Naive thymus-derived CD4-positive, alpha-beta T cell (primary cell): ENCODE measurements at regions of chr18 and their contacts with region 1.

Region 1: GRCh38 chr18:43159086-43159770 is 43.7 kb upstream of the RIT2 start:
- DNase-seq: no peak
- ATAC-seq: no peak
- H3K4me3 ChIP-seq: no peak overlapping the region
- H3K4me3 Mint-ChIP-seq: no peak overlapping the region
- H3K27ac ChIP-seq: no peak overlapping the region
- H3K27ac Mint-ChIP-seq: no peak overlapping the region
- H3K4me1 ChIP-seq: no peaks in the 10 kb centered on the region
- H3K4me1 Mint-ChIP-seq: no peaks in the 10 kb centered on the region
- H3K27me3 ChIP-seq: no peaks in the 10 kb centered on the region
- H3K27me3 Mint-ChIP-seq: no peaks in the 10 kb centered on the region

Region 2: GRCh38 chr18:43115076-43115921 is 43.9 kb before region 1 on chr18 and contains the start of gene RIT2:
- CTCF ChIA-PET with region 1: no interaction called
- POLR2A ChIA-PET with region 1: no interaction called
- intact Hi-C with region 1: no loop called
- DNase-seq: no peak
- ATAC-seq: no peak
- H3K4me3 ChIP-seq: no peak within 1 kb of the TSS
- H3K4me3 Mint-ChIP-seq: no peak within 1 kb of the TSS
- H3K27ac ChIP-seq: no peak within 1 kb of the TSS
- H3K27ac Mint-ChIP-seq: no peak within 1 kb of the TSS
- H3K4me1 ChIP-seq: no peaks in the 10 kb centered on the region
- H3K4me1 Mint-ChIP-seq: no peaks in the 10 kb centered on the region
- H3K27me3 ChIP-seq: no peaks in the 10 kb centered on the region
- H3K27me3 Mint-ChIP-seq: no peaks in the 10 kb centered on the region
- total RNA-seq, gene RIT2: not detected

Region 3: DNA sequence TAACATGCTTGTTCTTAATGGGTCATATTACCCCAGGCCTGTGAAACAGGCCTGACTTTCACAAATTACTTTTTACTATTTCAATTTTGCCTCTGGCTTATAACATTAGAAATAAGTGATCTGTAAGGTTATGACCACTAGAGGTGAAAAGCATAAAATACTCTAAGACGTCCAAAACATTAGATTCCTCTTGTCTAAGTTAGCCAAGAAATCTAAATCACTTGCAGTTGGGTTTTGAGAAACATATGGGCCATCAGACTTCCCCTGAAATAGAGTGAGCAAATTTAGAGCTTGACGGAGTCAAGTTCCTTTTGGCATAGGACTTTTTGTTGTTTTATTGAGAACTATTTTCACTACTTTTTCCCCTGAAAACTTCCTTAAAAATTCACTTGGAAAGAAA is 11.0 kb before region 1 on chr18:
- CTCF ChIA-PET with region 1: no interaction called
- POLR2A ChIA-PET with region 1: no interaction called
- intact Hi-C with region 1: no loop called
- DNase-seq: no peak
- ATAC-seq: no peak
- H3K4me3 ChIP-seq: no peak overlapping the region
- H3K4me3 Mint-ChIP-seq: no peak overlapping the region
- H3K27ac ChIP-seq: no peak overlapping the region
- H3K27ac Mint-ChIP-seq: no peak overlapping the region
- H3K4me1 ChIP-seq: no peaks in the 10 kb centered on the region
- H3K4me1 Mint-ChIP-seq: no peaks in the 10 kb centered on the region
- H3K27me3 ChIP-seq: no peaks in the 10 kb centered on the region
- H3K27me3 Mint-ChIP-seq: no peaks in the 10 kb centered on the region

Region 4: DNA sequence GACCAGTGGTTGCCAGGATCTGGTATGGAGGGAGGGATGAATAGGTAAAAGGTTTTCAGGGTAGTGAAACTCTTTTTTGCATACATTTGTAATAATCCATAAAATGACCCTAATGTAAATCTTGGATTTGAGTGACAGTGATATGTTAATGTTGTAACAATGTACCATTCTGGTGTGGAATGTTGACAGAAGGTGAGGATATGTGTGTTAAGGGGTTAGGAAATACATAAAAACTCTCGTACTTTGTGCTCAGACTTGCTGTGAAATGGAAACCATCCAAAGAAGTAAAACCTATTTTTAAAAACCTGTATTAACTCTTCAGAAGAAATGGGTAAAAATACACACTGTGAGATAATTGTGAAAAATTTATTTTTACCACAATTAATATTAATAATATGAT is 51.8 kb after region 1 on chr18:
- CTCF ChIA-PET with region 1: no interaction called
- POLR2A ChIA-PET with region 1: no interaction called
- intact Hi-C with region 1: loop called in 1 of 2 experiments (anchors 10 kb)
- DNase-seq: no peak
- ATAC-seq: no peak
- H3K4me3 ChIP-seq: no peak overlapping the region
- H3K4me3 Mint-ChIP-seq: no peak overlapping the region
- H3K27ac ChIP-seq: no peak overlapping the region
- H3K27ac Mint-ChIP-seq: no peak overlapping the region
- H3K4me1 ChIP-seq: no peaks in the 10 kb centered on the region
- H3K4me1 Mint-ChIP-seq: no peaks in the 10 kb centered on the region
- H3K27me3 ChIP-seq: no peaks in the 10 kb centered on the region
- H3K27me3 Mint-ChIP-seq: no peaks in the 10 kb centered on the region

Region 5: DNA sequence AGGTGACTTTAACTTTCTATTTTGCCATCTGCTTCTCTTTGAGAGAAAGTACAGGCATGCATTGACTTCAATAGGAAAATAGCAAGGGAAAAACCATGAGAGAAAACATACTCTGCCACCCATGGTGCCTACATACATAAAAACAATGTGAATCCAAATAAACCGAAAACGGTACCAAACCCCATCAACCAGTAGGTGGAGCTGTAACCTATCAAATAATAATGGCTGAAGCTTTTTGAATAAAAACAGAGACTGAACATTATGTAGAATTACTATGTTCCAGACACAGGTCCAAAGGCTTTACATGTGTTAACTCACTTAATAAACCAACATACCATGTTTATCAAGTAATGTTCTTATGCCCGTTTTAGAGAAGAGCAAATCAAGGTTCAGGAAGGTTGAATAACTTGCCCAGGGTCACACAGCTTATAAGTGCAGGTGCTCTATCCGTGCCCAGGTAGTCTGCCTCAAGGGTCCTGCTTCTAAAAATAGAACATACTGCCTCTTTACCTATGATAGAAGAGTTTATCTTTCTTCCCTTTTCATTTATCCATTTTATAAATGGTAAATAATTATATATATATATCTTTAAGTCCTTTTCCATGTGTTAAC is 412.0 kb after region 1 on chr18:
- CTCF ChIA-PET with region 1: no interaction called
- POLR2A ChIA-PET with region 1: no interaction called
- intact Hi-C with region 1: no loop called
- DNase-seq: no peak
- ATAC-seq: no peak
- H3K4me3 ChIP-seq: no peak overlapping the region
- H3K4me3 Mint-ChIP-seq: no peak overlapping the region
- H3K27ac ChIP-seq: no peak overlapping the region
- H3K27ac Mint-ChIP-seq: no peak overlapping the region
- H3K4me1 ChIP-seq: no peaks in the 10 kb centered on the region
- H3K4me1 Mint-ChIP-seq: no peaks in the 10 kb centered on the region
- H3K27me3 ChIP-seq: no peaks in the 10 kb centered on the region
- H3K27me3 Mint-ChIP-seq: no peaks in the 10 kb centered on the region